Activated B cell treated with CpG ODN at 0.5 μM for 24 hours (primary cell): ENCODE measurements at regions of chr7 and their contacts with region 1.

Region 1: GRCh38 chr7:3082831-3083230 is 39.2 kb upstream of the CARD11 start:
- DNase-seq: no peak
- ATAC-seq: no peak
- H3K4me3 Mint-ChIP-seq: no peak overlapping the region
- H3K27ac Mint-ChIP-seq: no peak overlapping the region
- H3K4me1 Mint-ChIP-seq: peaks cover 23% of the 10 kb centered on the region
- H3K27me3 Mint-ChIP-seq: no peaks in the 10 kb centered on the region
- CTCF ChIP-seq: no peak

Region 2: DNA sequence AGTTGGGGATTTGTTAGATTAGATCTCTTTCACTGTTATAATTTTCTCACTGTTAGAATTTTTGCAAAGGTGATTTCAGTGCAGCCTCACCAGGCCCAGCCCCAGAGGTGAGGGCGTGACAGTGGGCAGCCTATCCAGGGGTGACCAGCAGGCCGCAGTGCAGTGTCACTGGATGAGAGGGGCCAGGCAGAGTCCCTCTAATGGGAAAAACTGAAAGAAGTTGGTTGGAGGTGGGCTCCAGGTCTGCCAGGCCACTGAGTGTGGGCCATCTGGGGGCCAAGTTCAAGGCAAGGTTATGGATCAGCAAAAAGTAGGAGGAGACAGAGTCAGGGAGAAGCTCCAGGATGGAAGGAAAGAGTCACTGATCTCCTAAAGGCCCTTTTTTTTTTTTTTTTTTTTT is 127.7 kb after region 1 on chr7:
- CTCF ChIA-PET with region 1: no interaction called
- POLR2A ChIA-PET with region 1: interaction called, 10 read pairs
- intact Hi-C with region 1: no loop called
- DNase-seq: no peak
- ATAC-seq: no peak
- H3K4me3 Mint-ChIP-seq: no peak overlapping the region
- H3K27ac Mint-ChIP-seq: no peak overlapping the region
- H3K4me1 Mint-ChIP-seq: no peaks in the 10 kb centered on the region
- H3K27me3 Mint-ChIP-seq: no peaks in the 10 kb centered on the region
- CTCF ChIP-seq: no peak